CD4-positive, alpha-beta T cell (primary cell): ENCODE measurements at regions of chr1 and their contacts with region 1.

Region 1: DNA sequence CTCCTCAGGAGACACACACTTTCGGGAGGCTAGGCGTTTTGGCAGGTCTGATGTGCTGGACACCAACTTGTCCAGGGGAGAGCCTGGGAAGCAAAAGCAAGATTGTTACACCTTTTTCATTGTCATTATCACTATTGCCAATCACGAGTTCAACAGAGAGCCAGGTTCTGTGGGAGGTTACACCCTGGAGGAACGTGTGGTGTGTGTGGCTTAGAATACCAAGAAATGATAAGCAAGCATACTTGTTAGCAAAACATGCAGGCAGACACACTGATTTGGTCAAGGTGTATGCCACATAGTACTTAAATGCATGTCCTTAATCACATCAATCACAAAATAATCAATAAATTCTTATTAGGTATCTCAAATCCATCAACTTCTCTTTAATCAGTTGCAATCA is 16.1 kb downstream of the HMGCS2 start:
- DNase-seq: no peak
- ATAC-seq: no peak
- H3K4me3 ChIP-seq: no peak overlapping the region
- H3K4me3 Mint-ChIP-seq: no peak overlapping the region
- H3K27ac ChIP-seq: no peak overlapping the region
- H3K27ac Mint-ChIP-seq: no peak overlapping the region
- H3K4me1 ChIP-seq: no peaks in the 10 kb centered on the region
- H3K4me1 Mint-ChIP-seq: no peaks in the 10 kb centered on the region
- H3K27me3 ChIP-seq: peaks cover 0 to 5% of the 10 kb centered on the region in 2 experiments
- H3K27me3 Mint-ChIP-seq: peaks cover 13% of the 10 kb centered on the region
- CTCF ChIP-seq: no peak

Region 2: GRCh38 chr1:119794876-119795240 is 42.3 kb after region 1 on chr1:
- CTCF ChIA-PET with region 1: no interaction called
- POLR2A ChIA-PET with region 1: no interaction called
- intact Hi-C with region 1: loop called in 1 of 2 experiments (anchors 5 kb)
- DNase-seq: no peak
- ATAC-seq: no peak
- H3K4me3 ChIP-seq: no peak overlapping the region
- H3K4me3 Mint-ChIP-seq: no peak overlapping the region
- H3K27ac ChIP-seq: no peak overlapping the region
- H3K27ac Mint-ChIP-seq: no peak overlapping the region
- H3K4me1 ChIP-seq: no peaks in the 10 kb centered on the region
- H3K4me1 Mint-ChIP-seq: peaks cover 10% of the 10 kb centered on the region
- H3K27me3 ChIP-seq: no peaks in the 10 kb centered on the region
- H3K27me3 Mint-ChIP-seq: peaks cover 8% of the 10 kb centered on the region
- CTCF ChIP-seq: no peak